K562 (cell line): ENCODE measurements at regions of chr6 and their contacts with region 1.

Region 1: DNA sequence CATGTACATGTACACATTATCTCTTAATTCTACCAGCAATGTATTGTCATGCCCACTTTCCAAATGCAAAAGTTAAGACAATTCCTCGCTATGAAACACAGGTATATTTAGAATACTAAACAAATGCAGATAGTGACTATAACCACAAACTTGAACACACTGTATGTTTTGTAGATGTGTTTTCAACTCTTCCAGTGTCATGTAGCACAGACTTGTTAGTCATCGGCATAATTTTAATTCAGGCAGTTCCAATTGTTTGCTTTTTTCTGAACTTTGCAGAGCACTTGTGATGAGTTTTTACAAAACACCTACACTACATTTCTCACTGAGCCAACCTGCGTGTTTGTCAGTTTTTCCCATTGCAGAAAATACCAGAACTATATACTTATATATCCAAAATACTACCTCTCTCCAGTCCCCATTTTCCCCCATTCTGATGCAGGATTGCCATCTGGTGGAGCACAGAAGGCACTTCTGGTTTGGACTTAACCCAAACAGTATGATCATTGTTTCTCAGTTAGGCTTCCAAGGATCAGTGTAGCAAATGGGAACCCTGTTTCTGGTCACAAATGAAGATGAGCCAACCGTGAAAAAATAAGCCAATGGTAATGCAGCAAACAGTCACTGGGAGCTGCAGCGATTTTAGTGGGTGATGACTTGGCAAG is 143.4 kb downstream of the ADGRB3 start:
- DNase-seq: peak; percentile 36 to 76 (median 47)
- ATAC-seq: peak; percentile 87
- H3K4me3 ChIP-seq: no peak overlapping the region
- H3K27ac ChIP-seq: no peak overlapping the region
- H3K4me1 ChIP-seq: 0 out of 5 replicates have a peak, but pooled peaks cover 0 to 3% of the 10 kb centered on the region in 2 experiments
- H3K27me3 ChIP-seq: no peaks in the 10 kb centered on the region
- CTCF ChIP-seq: peak; percentile 78 to 93 (median 86)
- EP300 ChIP-seq: no peak
- POLR2A ChIP-seq: no peak
- RAD21 ChIP-seq: peak; percentile 97

Region 2: DNA sequence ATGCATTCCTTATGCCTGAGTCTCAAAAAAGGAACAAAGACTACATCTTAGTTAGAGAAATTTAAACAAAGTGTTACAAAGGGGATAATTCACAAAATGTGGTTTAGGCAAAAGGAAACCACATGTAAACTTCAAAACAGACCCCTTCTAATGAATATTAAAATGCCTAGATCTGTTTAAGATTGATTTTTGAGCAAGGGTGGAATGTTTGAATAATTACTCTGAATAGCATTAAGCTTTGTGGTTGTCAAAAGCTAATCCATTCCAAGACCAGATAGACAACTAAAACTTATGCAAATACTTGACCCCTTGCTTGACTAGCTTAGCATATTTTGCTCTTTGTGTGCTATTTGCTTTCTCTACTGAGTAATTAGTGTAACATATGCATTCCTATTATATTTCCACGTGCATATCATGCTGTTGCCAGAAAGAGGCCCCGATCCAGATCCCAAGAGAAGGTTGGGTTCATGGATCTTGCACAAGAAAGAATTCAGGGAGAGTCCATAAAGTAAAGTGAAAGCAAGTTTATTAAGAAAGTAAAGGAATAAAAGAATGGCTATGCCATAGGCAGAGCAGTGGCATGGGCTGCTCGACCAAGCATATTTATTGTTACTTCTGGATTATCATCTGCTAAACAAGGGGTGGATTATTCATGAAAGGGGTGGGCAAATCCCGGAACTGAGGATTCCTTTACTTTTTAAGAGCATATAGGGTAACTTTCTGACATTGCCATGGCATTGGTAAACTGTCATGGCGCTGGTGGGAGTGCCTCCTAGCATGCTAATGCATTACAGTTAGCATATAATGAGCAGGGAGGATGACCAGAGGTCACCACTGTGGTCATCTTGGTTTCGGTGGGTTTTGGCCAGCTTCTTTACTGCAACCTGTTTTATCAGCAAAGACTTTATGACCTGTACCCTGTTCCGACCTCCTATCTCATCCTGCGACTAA is 1878.1 kb before region 1 on chr6:
- CTCF ChIA-PET with region 1: no interaction called
- POLR2A ChIA-PET with region 1: no interaction called
- in situ Hi-C with region 1: loop called (anchors 25 kb)
- intact Hi-C with region 1: no loop called
- DNase-seq: no peak
- ATAC-seq: no peak
- H3K4me3 ChIP-seq: no peak overlapping the region
- H3K27ac ChIP-seq: no peak overlapping the region
- H3K4me1 ChIP-seq: no peaks in the 10 kb centered on the region
- H3K27me3 ChIP-seq: no peaks in the 10 kb centered on the region
- CTCF ChIP-seq: no peak
- EP300 ChIP-seq: no peak
- POLR2A ChIP-seq: no peak
- RAD21 ChIP-seq: no peak

Region 3: DNA sequence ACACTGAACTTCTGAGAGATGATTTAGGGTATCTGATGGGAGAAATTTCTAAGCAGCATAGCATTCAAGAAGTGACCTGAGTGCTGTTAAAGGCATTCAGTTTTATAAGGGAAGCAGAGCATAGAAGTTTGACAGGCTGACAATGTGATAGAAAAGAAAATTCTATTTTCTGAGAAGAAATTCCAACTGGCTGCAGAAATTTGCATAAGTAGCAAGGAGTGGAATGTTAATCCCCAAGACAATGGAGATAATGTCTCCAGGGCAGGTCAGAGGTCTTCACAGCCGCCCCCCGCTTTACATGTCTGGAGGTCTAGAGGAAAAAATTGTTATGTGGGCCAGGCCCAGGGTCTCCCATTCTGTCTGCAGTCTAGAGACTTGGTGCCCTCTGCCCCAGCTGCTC is 1709.7 kb before region 1 on chr6:
- CTCF ChIA-PET with region 1: interaction called, 3 read pairs
- POLR2A ChIA-PET with region 1: no interaction called
- in situ Hi-C with region 1: no loop called
- intact Hi-C with region 1: loop called (anchors 10 kb)
- DNase-seq: no peak
- ATAC-seq: no peak
- H3K4me3 ChIP-seq: no peak overlapping the region
- H3K27ac ChIP-seq: no peak overlapping the region
- H3K4me1 ChIP-seq: no peaks in the 10 kb centered on the region
- H3K27me3 ChIP-seq: no peaks in the 10 kb centered on the region
- CTCF ChIP-seq: no peak
- EP300 ChIP-seq: no peak
- POLR2A ChIP-seq: no peak
- RAD21 ChIP-seq: no peak

Region 4: DNA sequence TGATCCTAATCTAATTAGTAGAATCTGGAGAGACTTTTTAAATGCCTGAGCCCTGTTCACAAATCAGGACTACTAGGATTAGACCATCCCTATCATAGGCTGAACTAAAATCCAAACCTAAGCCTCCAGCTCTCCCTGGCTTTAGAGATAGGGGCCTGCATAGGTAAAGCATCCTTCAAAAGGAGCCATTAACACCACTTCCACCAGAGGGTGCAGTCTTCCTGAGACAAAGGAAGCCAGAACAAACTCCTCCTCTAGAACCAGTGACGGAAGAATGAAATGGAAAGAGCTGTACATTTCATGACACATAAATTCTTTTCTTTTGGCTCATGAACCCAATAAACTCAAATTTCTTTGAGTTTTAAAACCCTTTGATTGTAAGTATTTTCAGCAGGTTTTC is 434.6 kb before region 1 on chr6:
- CTCF ChIA-PET with region 1: interaction called, 5 read pairs
- POLR2A ChIA-PET with region 1: interaction called, 3 read pairs
- in situ Hi-C with region 1: loop called (anchors 10 kb)
- intact Hi-C with region 1: loop called (anchors 1 kb)
- DNase-seq: peak; percentile 53 to 82 (median 62)
- ATAC-seq: peak; percentile 99
- H3K4me3 ChIP-seq: no peak overlapping the region
- H3K27ac ChIP-seq: no peak overlapping the region
- H3K4me1 ChIP-seq: no peaks in the 10 kb centered on the region
- H3K27me3 ChIP-seq: no peaks in the 10 kb centered on the region
- CTCF ChIP-seq: peak; percentile 84 to 97 (median 97)
- EP300 ChIP-seq: no peak
- POLR2A ChIP-seq: no peak
- RAD21 ChIP-seq: peak; percentile 85 to 88

Region 5: DNA sequence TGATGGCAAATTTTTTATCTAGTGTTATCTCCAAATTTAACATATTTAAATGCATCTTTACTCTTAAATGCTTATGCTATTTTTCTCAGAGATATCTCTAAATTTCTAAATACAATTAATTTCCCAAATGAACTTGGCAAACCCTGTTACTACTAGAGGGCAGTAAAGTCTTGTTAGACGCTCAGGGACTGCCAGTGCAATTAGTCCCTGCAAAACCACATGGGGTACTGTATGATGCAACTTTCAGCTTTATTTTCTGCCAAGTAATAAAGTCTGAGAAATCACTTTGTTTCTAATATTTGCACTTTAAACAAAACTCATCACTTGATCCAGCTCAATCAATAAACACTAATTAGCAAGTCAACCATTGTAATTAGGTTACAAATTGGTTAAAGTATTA is 219.4 kb before region 1 on chr6:
- CTCF ChIA-PET with region 1: no interaction called
- POLR2A ChIA-PET with region 1: no interaction called
- in situ Hi-C with region 1: no loop called
- intact Hi-C with region 1: loop called (anchors 5 kb)
- DNase-seq: peak in 2 of 4 experiments; percentile 9 to 24
- ATAC-seq: peak; percentile 91
- H3K4me3 ChIP-seq: no peak overlapping the region
- H3K27ac ChIP-seq: no peak overlapping the region
- H3K4me1 ChIP-seq: no peaks in the 10 kb centered on the region
- H3K27me3 ChIP-seq: no peaks in the 10 kb centered on the region
- CTCF ChIP-seq: peak in 2 of 3 experiments; percentile 36 to 45; a peak in 3 of 6 replicates
- EP300 ChIP-seq: no peak
- POLR2A ChIP-seq: no peak
- RAD21 ChIP-seq: peak; percentile 32 to 49; a peak in 3 of 4 replicates

Region 6: GRCh38 chr6:68572525-68572924 is 206.0 kb before region 1 on chr6:
- CTCF ChIA-PET with region 1: interaction called, 5 read pairs
- POLR2A ChIA-PET with region 1: interaction called, 3 read pairs
- in situ Hi-C with region 1: loop called (anchors 5 kb)
- intact Hi-C with region 1: loop called (anchors 1 kb)
- DNase-seq: peak; percentile 51 to 83 (median 62)
- ATAC-seq: peak; percentile 92
- H3K4me3 ChIP-seq: no peak overlapping the region
- H3K27ac ChIP-seq: no peak overlapping the region
- H3K4me1 ChIP-seq: no peaks in the 10 kb centered on the region
- H3K27me3 ChIP-seq: no peaks in the 10 kb centered on the region
- CTCF ChIP-seq: peak; percentile 80 to 95 (median 94)
- EP300 ChIP-seq: no peak
- POLR2A ChIP-seq: no peak
- RAD21 ChIP-seq: peak; percentile 76 to 89